Sciatic nerve (tissue), 2 donors: ENCODE measurements at regions of chr20 and their contacts with region 1.

Region 1: GRCh38 chr20:59848182-59848581 is 85.3 kb downstream of the SYCP2 start:
- DNase-seq: no peak
- ATAC-seq: no peak

Region 2: DNA sequence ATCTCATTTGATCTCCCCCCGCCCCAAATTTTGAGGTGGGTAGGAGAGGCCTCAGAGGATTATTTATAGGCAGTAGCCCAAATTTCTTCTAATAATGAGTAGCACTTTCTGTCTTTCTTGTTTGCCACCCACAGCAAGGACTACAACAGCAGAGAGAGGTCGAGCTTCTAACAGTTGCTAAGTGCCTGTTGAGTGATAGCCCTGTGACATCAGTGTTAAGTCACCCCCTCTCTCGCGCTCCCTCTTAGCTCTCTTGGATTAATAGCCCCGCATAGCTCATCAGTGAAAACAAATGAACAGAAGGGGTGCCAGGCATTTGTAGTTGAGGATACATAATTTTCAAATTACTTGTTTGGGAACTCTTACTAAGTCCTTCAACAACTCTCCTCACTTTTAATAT is 1623.2 kb before region 1 on chr20:
- intact Hi-C with region 1: loop called (anchors 5 kb)
- DNase-seq: no peak
- ATAC-seq: no peak

Region 3: GRCh38 chr20:59782986-59783640 is 65.1 kb before region 1 on chr20:
- intact Hi-C with region 1: loop called (anchors 10 kb)
- DNase-seq: peak; percentile 78
- ATAC-seq: peak; percentile 70